ENCODE measurements at regions of chr20 and their contacts with region 1.

Region 1: DNA sequence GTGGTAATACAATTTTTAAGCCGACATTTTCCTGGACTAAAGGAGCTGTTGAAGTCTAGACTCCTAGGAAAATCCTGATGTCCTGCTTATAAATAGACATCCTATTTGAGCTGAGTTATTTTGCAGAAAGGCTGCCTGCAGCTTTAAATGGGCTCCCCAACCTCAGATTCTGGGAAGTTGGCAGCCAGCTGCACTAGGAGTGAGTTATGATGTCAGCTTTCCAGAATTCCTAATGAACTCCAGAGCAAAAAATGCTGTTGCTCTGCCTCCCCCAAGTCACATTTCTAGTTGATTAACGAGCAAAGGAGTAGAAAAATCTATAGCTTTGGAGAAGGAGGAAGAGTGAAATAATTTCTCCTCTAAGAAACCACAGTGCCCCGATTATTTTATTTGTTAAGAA is 346.3 kb upstream of the SULF2 start:
- DNase-seq: no peak
- H3K4me3 ChIP-seq: no peak overlapping the region
- H3K27ac ChIP-seq: no peak overlapping the region
- H3K4me1 ChIP-seq: peaks cover 0 to 40% (median 30%) of the 10 kb centered on the region in 4 donors
- H3K27me3 ChIP-seq: no peaks in the 10 kb centered on the region
- CTCF ChIP-seq: no peak
- EP300 ChIP-seq: no peak
- POLR2A ChIP-seq: no peak

Region 2: DNA sequence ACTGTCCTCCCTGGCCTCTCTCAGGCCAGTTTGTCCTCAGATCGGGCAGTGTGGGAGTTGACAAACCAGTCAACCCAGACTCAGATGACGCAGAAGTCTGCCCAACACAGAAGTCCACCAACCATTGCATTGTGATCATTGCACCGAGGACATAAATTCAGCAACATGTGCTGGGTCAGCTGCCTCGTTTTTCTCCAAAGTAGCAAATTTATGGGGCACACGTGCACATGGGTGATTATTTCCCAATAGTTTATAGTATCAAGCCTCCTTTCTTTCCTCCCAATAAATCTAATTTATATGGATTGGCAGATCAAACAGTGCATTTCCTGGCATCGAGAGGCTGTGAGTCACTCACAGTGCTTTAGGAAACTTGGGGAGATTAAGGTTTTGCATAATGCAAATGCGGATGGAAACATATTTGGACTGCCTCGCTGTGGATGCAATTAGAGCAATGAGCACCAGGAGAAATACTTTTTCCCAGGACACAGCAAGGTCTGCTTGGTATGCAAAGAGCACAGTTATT is 67.4 kb after region 1 on chr20:
- intact Hi-C with region 1: loop called (anchors 10 kb)
- DNase-seq: no peak
- H3K4me3 ChIP-seq: no peak overlapping the region
- H3K27ac ChIP-seq: no peak overlapping the region
- H3K4me1 ChIP-seq: peaks cover 0 to 17% (median 13%) of the 10 kb centered on the region in 4 donors
- H3K27me3 ChIP-seq: no peaks in the 10 kb centered on the region
- CTCF ChIP-seq: no peak
- EP300 ChIP-seq: no peak
- POLR2A ChIP-seq: no peak

Region 3: GRCh38 chr20:48807661-48808427 is 676.3 kb after region 1 on chr20:
- intact Hi-C with region 1: no loop called
- DNase-seq: no peak
- H3K4me3 ChIP-seq: no peak overlapping the region
- H3K27ac ChIP-seq: no peak overlapping the region
- H3K4me1 ChIP-seq: peaks cover 1 to 25% (median 14%) of the 10 kb centered on the region in 4 donors
- H3K27me3 ChIP-seq: peaks cover 0 to 4% (median 0%) of the 10 kb centered on the region in 4 donors
- CTCF ChIP-seq: no peak
- EP300 ChIP-seq: no peak
- POLR2A ChIP-seq: no peak

Measured in esophagus muscularis mucosa (tissue), 4 donors.